ENCODE measurements at regions of chr17 and their contacts with region 1.

Region 1: GRCh38 chr17:57130761-57131461 is 45.9 kb downstream of the AKAP1 start:
- DNase-seq: peak; percentile 88 to 90
- H3K4me3 ChIP-seq: no peak overlapping the region
- H3K27ac ChIP-seq: no peak overlapping the region
- H3K4me1 ChIP-seq: peaks cover 0 to 9% (median 2%) of the 10 kb centered on the region in 4 donors
- H3K27me3 ChIP-seq: peaks cover 0 to 3% of the 10 kb centered on the region in 2 donors
- CTCF ChIP-seq: peak; percentile 54 to 88

Region 2: GRCh38 chr17:57243171-57243948 is 112.4 kb after region 1 on chr17:
- intact Hi-C with region 1: loop called (anchors 10 kb)
- DNase-seq: peak; percentile 40 to 78
- H3K4me3 ChIP-seq: no peak overlapping the region
- H3K27ac ChIP-seq: no peak overlapping the region
- H3K4me1 ChIP-seq: no peaks in the 10 kb centered on the region
- H3K27me3 ChIP-seq: peaks cover 0 to 16% of the 10 kb centered on the region in 2 donors
- CTCF ChIP-seq: peak; percentile 97 to 98

Region 3: GRCh38 chr17:57505841-57506773 is 375.2 kb after region 1 on chr17:
- intact Hi-C with region 1: no loop called
- DNase-seq: no peak
- H3K4me3 ChIP-seq: no peak overlapping the region
- H3K27ac ChIP-seq: no peak overlapping the region
- H3K4me1 ChIP-seq: peaks cover 0 to 26% (median 14%) of the 10 kb centered on the region in 4 donors
- H3K27me3 ChIP-seq: no peaks in the 10 kb centered on the region
- CTCF ChIP-seq: no peak

Region 4: GRCh38 chr17:57671667-57672632 is 541.0 kb after region 1 on chr17:
- intact Hi-C with region 1: loop called (anchors 2 kb)
- DNase-seq: peak; percentile 63 to 81
- H3K4me3 ChIP-seq: no peak overlapping the region
- H3K27ac ChIP-seq: no peak overlapping the region
- H3K4me1 ChIP-seq: peaks cover 0 to 7% (median 3%) of the 10 kb centered on the region in 4 donors
- H3K27me3 ChIP-seq: no peaks in the 10 kb centered on the region
- CTCF ChIP-seq: peak; percentile 86 to 93

Region 5: GRCh38 chr17:57747221-57748017 is 616.5 kb after region 1 on chr17:
- intact Hi-C with region 1: loop called (anchors 5 kb)
- DNase-seq: no peak
- H3K4me3 ChIP-seq: no peak overlapping the region
- H3K27ac ChIP-seq: no peak overlapping the region
- H3K4me1 ChIP-seq: no peaks in the 10 kb centered on the region
- H3K27me3 ChIP-seq: peaks cover 0 to 38% of the 10 kb centered on the region in 2 donors
- CTCF ChIP-seq: peak; percentile 60 to 68

Region 6: DNA sequence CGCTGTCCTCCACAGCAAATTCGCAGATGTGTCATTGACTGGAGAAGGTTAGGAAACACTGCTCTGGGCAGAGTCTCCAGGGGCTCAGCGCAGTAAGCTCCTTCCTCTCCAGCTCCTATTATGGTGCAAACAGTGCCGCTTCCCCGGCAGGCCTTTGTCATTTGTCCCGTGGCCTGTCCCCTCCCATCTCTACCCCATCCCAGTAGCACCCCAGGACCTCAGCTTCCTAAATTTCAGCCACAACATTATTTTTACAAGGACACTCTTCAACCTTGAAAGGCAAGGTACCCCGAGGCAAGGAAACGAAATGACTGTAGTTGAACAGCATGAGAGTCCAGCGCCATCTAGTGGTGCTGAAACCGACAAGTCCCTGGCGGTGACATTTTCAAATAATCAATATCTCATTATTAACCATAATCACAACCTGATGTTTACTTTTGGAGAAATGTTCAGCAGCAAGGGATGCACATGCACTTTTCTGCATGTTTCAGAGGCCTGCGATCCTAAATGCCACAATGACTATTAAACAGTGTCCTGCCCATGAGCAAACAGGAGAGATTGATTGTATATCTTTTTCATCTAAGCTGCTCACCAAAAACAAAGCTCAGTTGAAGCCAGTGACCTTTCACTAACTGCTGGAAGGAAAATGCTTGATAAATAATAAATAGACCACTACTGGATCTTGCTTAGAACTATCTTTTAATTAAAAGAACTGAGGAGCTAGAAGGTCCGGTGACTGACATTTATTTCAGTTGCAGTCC is 702.4 kb after region 1 on chr17:
- intact Hi-C with region 1: loop called (anchors 5 kb)
- DNase-seq: peak; percentile 70 to 87
- H3K4me3 ChIP-seq: peak overlapping the region; percentile 40 to 56
- H3K27ac ChIP-seq: peak overlapping the region; percentile 78 to 83
- H3K4me1 ChIP-seq: peaks cover 0 to 28% (median 17%) of the 10 kb centered on the region in 4 donors
- H3K27me3 ChIP-seq: no peaks in the 10 kb centered on the region
- CTCF ChIP-seq: peak; percentile 89 to 91

Region 7: GRCh38 chr17:58112970-58113631 is 982.2 kb after region 1 on chr17:
- intact Hi-C with region 1: loop called (anchors 10 kb)
- DNase-seq: peak; percentile 79 to 82
- H3K4me3 ChIP-seq: no peak overlapping the region
- H3K27ac ChIP-seq: no peak overlapping the region
- H3K4me1 ChIP-seq: no peaks in the 10 kb centered on the region
- H3K27me3 ChIP-seq: peaks cover 0 to 12% of the 10 kb centered on the region in 2 donors
- CTCF ChIP-seq: peak; percentile 91 to 93